Breast epithelium (tissue), 4 donors: ENCODE measurements at regions of chr1 and their contacts with region 1.

Region 1: GRCh38 chr1:115811140-115811828 is 29.6 kb downstream of the NHLH2 start:
- DNase-seq: no peak
- H3K4me3 ChIP-seq: no peak overlapping the region
- H3K27ac ChIP-seq: no peak overlapping the region
- H3K4me1 ChIP-seq: no peaks in the 10 kb centered on the region
- H3K27me3 ChIP-seq: no peaks in the 10 kb centered on the region
- CTCF ChIP-seq: no peak
- POLR2A ChIP-seq: no peak

Region 2: DNA sequence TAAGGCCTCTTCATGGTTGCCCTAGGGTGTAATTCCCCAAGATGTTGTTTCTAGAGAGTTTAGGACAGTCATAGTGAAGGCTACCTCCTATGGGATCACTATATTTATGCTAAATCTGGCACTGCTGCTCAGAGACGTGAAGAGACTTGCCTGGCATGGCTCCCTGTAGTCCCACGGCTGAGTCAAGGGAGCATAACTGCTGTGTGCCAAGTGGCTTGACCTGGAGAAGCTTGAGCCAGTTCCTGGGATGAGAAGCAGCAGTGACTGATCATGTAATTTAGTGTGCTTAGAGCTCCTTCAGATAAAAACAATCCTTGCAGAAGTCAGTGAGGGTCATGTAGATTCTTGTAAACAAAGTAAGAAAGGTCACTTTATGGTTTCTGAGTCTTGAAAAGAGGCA is 653.1 kb before region 1 on chr1:
- intact Hi-C with region 1: no loop called
- DNase-seq: no peak
- H3K4me3 ChIP-seq: no peak overlapping the region
- H3K27ac ChIP-seq: peak overlapping the region in 1 of 2 donors; percentile 32
- H3K4me1 ChIP-seq: no peaks in the 10 kb centered on the region
- H3K27me3 ChIP-seq: no peaks in the 10 kb centered on the region
- CTCF ChIP-seq: no peak
- POLR2A ChIP-seq: no peak

Region 3: GRCh38 chr1:115988942-115989341 is 177.7 kb after region 1 on chr1:
- intact Hi-C with region 1: loop called (anchors 5 kb)
- DNase-seq: no peak
- H3K4me3 ChIP-seq: no peak overlapping the region
- H3K27ac ChIP-seq: no peak overlapping the region
- H3K4me1 ChIP-seq: no peaks in the 10 kb centered on the region
- H3K27me3 ChIP-seq: no peaks in the 10 kb centered on the region
- CTCF ChIP-seq: no peak
- POLR2A ChIP-seq: no peak